Vagina (tissue), 2 donors: ENCODE measurements at regions of chr10 and their contacts with region 1.

Region 1: GRCh38 chr10:114550756-114551635 is 107.1 kb downstream of the ABLIM1 start:
- DNase-seq: no peak
- H3K4me3 ChIP-seq: peak overlapping the region; percentile 2 to 24
- H3K27ac ChIP-seq: peak overlapping the region; percentile 11
- H3K4me1 ChIP-seq: peaks cover 13% of the 10 kb centered on the region
- H3K27me3 ChIP-seq: no peaks in the 10 kb centered on the region
- CTCF ChIP-seq: peak; percentile 43 to 65 (median 64)
- POLR2A ChIP-seq: no peak

Region 2: GRCh38 chr10:114470956-114471905 is 79.8 kb before region 1 on chr10:
- intact Hi-C with region 1: loop called (anchors 2 kb)
- DNase-seq: no peak
- H3K4me3 ChIP-seq: no peak overlapping the region
- H3K27ac ChIP-seq: no peak overlapping the region
- H3K4me1 ChIP-seq: no peaks in the 10 kb centered on the region
- H3K27me3 ChIP-seq: no peaks in the 10 kb centered on the region
- CTCF ChIP-seq: peak; percentile 75 to 88 (median 87)
- POLR2A ChIP-seq: no peak

Region 3: DNA sequence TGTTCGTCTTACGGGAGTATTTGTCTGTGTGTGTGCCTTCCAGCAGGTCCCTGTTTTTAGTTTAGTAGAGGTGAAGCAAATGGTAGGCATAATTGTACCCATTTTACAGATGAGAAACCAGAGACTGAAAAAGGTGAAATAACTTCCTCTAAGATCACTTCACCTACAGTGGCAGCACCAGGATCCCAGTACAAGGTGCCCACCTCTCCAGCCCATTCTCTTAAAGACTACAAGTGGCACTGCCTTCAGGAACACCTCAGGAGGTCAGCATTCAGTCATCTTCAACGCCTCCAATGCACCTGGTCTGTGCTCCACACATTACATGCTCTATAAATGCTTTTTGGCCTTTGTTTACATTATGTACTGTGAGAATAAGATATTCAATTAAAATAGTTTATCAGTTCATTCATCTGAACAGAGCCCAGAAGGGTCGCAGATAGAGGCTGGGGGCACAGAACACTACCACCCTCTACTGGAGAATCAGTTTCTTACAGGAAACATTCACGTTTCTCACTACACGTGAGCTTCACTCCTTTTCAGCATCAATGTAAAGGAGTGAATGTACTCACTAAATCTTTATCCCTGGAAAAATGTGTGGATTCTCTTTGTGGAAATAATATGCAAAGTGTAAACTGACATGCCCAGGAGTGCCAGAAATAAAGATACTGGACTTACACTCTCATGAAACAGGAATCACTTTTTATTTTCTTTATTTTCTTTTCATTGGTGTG is 152.5 kb after region 1 on chr10:
- intact Hi-C with region 1: loop called (anchors 5 kb)
- DNase-seq: no peak
- H3K4me3 ChIP-seq: no peak overlapping the region
- H3K27ac ChIP-seq: no peak overlapping the region
- H3K4me1 ChIP-seq: peaks cover 6% of the 10 kb centered on the region
- H3K27me3 ChIP-seq: no peaks in the 10 kb centered on the region
- CTCF ChIP-seq: peak in 2 of 3 experiments; percentile 44 to 47
- POLR2A ChIP-seq: no peak

Region 4: DNA sequence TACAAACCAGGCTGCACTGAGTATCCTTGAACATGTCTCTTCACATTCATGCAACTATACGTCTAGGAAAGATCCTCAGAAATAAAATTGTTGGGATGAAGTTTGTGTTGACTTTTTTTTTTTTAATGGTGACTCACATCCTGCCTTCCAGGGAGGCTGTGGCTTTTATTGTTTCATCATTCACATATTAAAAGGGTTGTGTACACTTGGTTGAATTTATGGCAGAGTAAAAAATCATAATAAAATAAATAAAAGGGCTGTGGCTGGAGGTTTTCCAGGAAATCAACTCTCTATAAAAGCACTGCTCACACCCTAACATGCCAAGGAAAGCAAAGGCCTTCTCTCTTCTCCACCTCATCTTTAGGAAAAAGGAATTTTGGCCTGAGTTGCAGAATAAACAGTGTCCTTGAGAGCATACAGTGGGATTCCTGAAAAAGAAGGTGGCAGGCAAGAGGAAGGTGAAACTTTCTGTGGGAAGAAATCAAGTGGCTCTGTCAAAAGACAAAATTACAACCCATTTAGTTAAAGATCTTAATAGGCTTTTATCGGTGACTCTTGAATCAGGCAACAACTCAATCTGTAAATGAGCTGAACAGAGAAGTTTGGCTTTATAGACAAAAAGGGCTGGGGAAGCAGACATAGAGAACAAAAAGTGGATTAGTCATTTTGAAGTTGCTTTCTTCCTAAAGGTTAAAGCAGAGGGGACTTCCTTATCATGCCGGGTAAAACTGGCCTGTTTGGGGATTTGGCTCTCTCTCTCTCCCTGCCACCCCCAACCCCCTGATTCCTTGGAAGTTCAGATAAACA is 229.0 kb after region 1 on chr10:
- intact Hi-C with region 1: loop called (anchors 5 kb)
- DNase-seq: no peak
- H3K4me3 ChIP-seq: no peak overlapping the region
- H3K27ac ChIP-seq: peak overlapping the region; percentile 51
- H3K4me1 ChIP-seq: peaks cover 18% of the 10 kb centered on the region
- H3K27me3 ChIP-seq: no peaks in the 10 kb centered on the region
- CTCF ChIP-seq: no peak
- POLR2A ChIP-seq: no peak

Region 5: GRCh38 chr10:114893251-114893650 is 342.3 kb after region 1 on chr10:
- intact Hi-C with region 1: no loop called
- DNase-seq: no peak
- H3K4me3 ChIP-seq: no peak overlapping the region
- H3K27ac ChIP-seq: no peak overlapping the region
- H3K4me1 ChIP-seq: no peaks in the 10 kb centered on the region
- H3K27me3 ChIP-seq: no peaks in the 10 kb centered on the region
- CTCF ChIP-seq: no peak
- POLR2A ChIP-seq: no peak